ENCODE measurements at regions of chr4 and their contacts with region 1.

Region 1: GRCh38 chr4:77433418-77433733 is 172.2 kb upstream of the CXCL13 start:
- DNase-seq: peak; percentile 42
- ATAC-seq: peak; percentile 89
- H3K4me3 Mint-ChIP-seq: no peak overlapping the region
- H3K27ac Mint-ChIP-seq: no peak overlapping the region
- H3K4me1 Mint-ChIP-seq: peaks cover 4% of the 10 kb centered on the region
- H3K27me3 Mint-ChIP-seq: no peaks in the 10 kb centered on the region

Region 2: DNA sequence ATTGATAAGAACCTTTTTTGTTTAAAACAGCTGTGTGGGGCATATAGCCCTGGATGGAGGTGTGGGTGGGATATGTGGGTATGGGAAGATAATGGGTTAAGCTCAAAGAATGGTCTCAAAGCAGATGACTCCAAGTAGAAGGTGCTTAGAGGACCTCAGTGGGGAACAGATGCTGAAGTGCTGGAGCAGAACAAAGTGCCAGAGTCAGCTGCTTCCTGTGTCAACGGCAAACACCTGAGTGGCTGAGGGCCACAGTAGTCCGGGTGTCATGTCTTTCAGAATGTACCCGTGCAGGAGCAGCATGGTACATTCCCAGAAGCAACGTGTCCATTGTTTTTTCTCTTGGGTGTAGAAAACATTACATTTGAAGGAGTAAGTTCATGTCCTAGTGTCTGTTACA is 65.7 kb before region 1 on chr4:
- CTCF ChIA-PET with region 1: interaction called, 17 read pairs
- POLR2A ChIA-PET with region 1: no interaction called
- DNase-seq: no peak
- ATAC-seq: no peak
- H3K4me3 Mint-ChIP-seq: no peak overlapping the region
- H3K27ac Mint-ChIP-seq: no peak overlapping the region
- H3K4me1 Mint-ChIP-seq: no peaks in the 10 kb centered on the region
- H3K27me3 Mint-ChIP-seq: peaks cover 10% of the 10 kb centered on the region

Region 3: GRCh38 chr4:77385124-77385969 is 48.0 kb before region 1 on chr4:
- CTCF ChIA-PET with region 1: interaction called, 10 read pairs
- POLR2A ChIA-PET with region 1: no interaction called
- DNase-seq: peak; percentile 65
- ATAC-seq: peak; percentile 69
- H3K4me3 Mint-ChIP-seq: no peak overlapping the region
- H3K27ac Mint-ChIP-seq: no peak overlapping the region
- H3K4me1 Mint-ChIP-seq: peaks cover 8% of the 10 kb centered on the region
- H3K27me3 Mint-ChIP-seq: peaks cover 12% of the 10 kb centered on the region

Measured in activated CD8-positive, alpha-beta T cell treated with anti-CD3 and anti-CD28 coated beads, Interleukin-2, amount 10 ng/mL, durations not matched to agents 7 days and 5 days (primary cell).